ENCODE measurements at regions of chr12 and their contacts with region 1.

Region 1: GRCh38 chr12:9673404-9674225 is 4.1 kb downstream of the CLEC2D start:
- DNase-seq: peak in 8 of 10 donors; percentile 27 to 64 (median 50)
- ATAC-seq: peak; percentile 31 to 33
- H3K4me3 Mint-ChIP-seq: peak overlapping the region; percentile 86 to 99 (median 95)
- H3K27ac Mint-ChIP-seq: peak overlapping the region; percentile 94 to 99 (median 96)
- H3K4me1 Mint-ChIP-seq: peaks cover 32 to 81% (median 63%) of the 10 kb centered on the region in 4 donors
- H3K27me3 Mint-ChIP-seq: no peaks in the 10 kb centered on the region

Region 2: GRCh38 chr12:9634177-9634803 is 39.3 kb before region 1 on chr12:
- POLR2A ChIA-PET with region 1: interaction called, 12 read pairs
- DNase-seq: peak; percentile 58 to 90 (median 78)
- ATAC-seq: peak; percentile 86 to 92
- H3K4me3 Mint-ChIP-seq: peak overlapping the region; percentile 45 to 82 (median 72)
- H3K27ac Mint-ChIP-seq: peak overlapping the region; percentile 82 to 99 (median 92)
- H3K4me1 Mint-ChIP-seq: peaks cover 27 to 78% (median 63%) of the 10 kb centered on the region in 4 donors
- H3K27me3 Mint-ChIP-seq: no peaks in the 10 kb centered on the region

Region 3: GRCh38 chr12:9647825-9648700 is 25.6 kb before region 1 on chr12:
- POLR2A ChIA-PET with region 1: interaction called, 547 read pairs
- DNase-seq: peak; percentile 81 to 97 (median 92)
- ATAC-seq: peak; percentile 72 to 75
- H3K4me3 Mint-ChIP-seq: peak overlapping the region; percentile 94 to 100 (median 98)
- H3K27ac Mint-ChIP-seq: peak overlapping the region; percentile 96 to 99 (median 98)
- H3K4me1 Mint-ChIP-seq: peaks cover 26 to 67% (median 46%) of the 10 kb centered on the region in 4 donors
- H3K27me3 Mint-ChIP-seq: peaks cover 0 to 2% (median 0%) of the 10 kb centered on the region in 5 donors

Region 4: GRCh38 chr12:9702255-9702654 is 28.6 kb after region 1 on chr12:
- POLR2A ChIA-PET with region 1: interaction called, 25 read pairs
- DNase-seq: peak in 8 of 10 donors; percentile 34 to 80 (median 68)
- ATAC-seq: peak; percentile 60 to 88
- H3K4me3 Mint-ChIP-seq: peak overlapping the region; percentile 47 to 85 (median 72)
- H3K27ac Mint-ChIP-seq: peak overlapping the region; percentile 82 to 97 (median 94)
- H3K4me1 Mint-ChIP-seq: peaks cover 31 to 84% (median 66%) of the 10 kb centered on the region in 4 donors
- H3K27me3 Mint-ChIP-seq: no peaks in the 10 kb centered on the region

Region 5: DNA sequence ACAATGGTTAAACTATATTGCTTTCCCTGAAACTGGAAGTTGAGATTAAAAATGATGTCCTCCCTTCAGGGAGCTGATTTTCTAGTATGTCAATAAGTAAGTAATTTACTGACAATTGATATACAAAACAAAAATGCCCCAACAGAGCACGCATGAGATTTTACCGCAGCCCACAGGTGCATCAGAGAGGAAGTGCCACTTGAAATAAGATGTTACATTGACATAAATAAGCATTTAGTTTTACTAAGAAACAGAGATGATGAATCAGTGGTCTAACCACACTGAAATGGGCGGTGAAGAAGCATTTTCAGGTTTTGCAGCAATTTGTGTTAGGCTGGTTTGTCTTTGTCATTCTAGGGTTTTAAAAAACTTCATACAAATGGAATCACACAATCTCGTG is 68.1 kb after region 1 on chr12:
- POLR2A ChIA-PET with region 1: interaction called, 22 read pairs
- DNase-seq: peak; percentile 30 to 94 (median 82)
- ATAC-seq: peak; percentile 76 to 80
- H3K4me3 Mint-ChIP-seq: peak overlapping the region; percentile 24 to 88 (median 76)
- H3K27ac Mint-ChIP-seq: peak overlapping the region; percentile 79 to 100 (median 98)
- H3K4me1 Mint-ChIP-seq: peaks cover 27 to 66% (median 63%) of the 10 kb centered on the region in 4 donors
- H3K27me3 Mint-ChIP-seq: no peaks in the 10 kb centered on the region

Region 6: DNA sequence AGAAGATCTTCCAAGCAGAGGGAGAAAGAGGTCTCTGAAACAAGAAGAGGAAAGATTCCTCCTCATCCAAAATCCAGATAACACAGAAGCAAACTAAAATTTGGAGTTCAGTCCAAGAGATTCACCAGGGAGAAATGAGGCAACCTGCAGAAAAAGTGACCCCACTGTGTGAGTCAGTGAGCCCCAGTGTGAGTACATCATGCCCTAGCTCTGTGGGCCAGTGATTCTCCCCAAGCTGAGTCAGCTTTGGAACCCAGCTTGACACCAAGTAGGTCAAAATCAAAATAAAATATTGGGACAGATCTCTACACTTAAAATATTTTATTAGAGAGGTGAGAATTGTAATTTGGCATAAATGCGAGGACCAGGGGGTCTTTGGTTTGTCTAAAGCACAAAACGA is 178.3 kb after region 1 on chr12:
- POLR2A ChIA-PET with region 1: no interaction called
- DNase-seq: no peak
- ATAC-seq: no peak
- H3K4me3 Mint-ChIP-seq: peak overlapping the region in 1 of 10 donors; percentile 30
- H3K27ac Mint-ChIP-seq: peak overlapping the region in 7 of 10 donors; percentile 39 to 87 (median 56)
- H3K4me1 Mint-ChIP-seq: peaks cover 18 to 49% (median 43%) of the 10 kb centered on the region in 4 donors
- H3K27me3 Mint-ChIP-seq: no peaks in the 10 kb centered on the region

Measured in naive thymus-derived CD8-positive, alpha-beta T cell (primary cell).